Psoas muscle (tissue), 8 donors: ENCODE measurements at regions of chr2 and their contacts with region 1.

Region 1: GRCh38 chr2:231925303-231926179 is 655 bp downstream of the NPPC start:
- DNase-seq: peak; percentile 86 to 93
- ATAC-seq: peak; percentile 92 to 98 (median 95)
- H3K4me3 ChIP-seq: peak overlapping the region; percentile 63
- H3K27ac ChIP-seq: no peak overlapping the region
- H3K4me1 ChIP-seq: peaks cover 22% of the 10 kb centered on the region
- H3K27me3 ChIP-seq: peaks cover 0 to 84% (median 13%) of the 10 kb centered on the region in 3 donors
- CTCF ChIP-seq: peak; percentile 94

Region 2: GRCh38 chr2:231557571-231558237 is 367.8 kb before region 1 on chr2:
- intact Hi-C with region 1: no loop called
- DNase-seq: peak; percentile 36 to 86
- ATAC-seq: peak; percentile 92 to 98 (median 96)
- H3K4me3 ChIP-seq: no peak overlapping the region
- H3K27ac ChIP-seq: peak overlapping the region; percentile 36
- H3K4me1 ChIP-seq: peaks cover 3% of the 10 kb centered on the region
- H3K27me3 ChIP-seq: no peaks in the 10 kb centered on the region
- CTCF ChIP-seq: peak; percentile 74

Region 3: DNA sequence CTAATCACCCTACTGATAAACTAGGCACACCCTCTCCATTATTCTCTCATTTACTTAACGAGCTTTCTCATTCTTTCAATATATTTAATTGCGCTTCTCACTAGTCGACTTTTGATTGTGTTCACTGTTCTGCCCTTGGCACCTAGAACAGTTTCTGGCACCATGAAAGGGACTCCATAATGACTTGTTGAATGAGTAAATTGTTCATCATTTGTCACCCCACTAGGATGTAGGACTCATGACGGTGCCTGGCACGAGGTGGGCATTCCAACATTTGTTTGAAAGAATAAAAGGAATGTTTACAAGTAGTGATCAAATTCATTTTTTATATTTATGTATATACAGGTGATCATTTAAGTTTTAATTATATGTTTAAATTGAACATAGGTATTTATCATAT is 159.6 kb after region 1 on chr2:
- intact Hi-C with region 1: no loop called
- DNase-seq: no peak
- ATAC-seq: no peak
- H3K4me3 ChIP-seq: no peak overlapping the region
- H3K27ac ChIP-seq: no peak overlapping the region
- H3K4me1 ChIP-seq: no peaks in the 10 kb centered on the region
- H3K27me3 ChIP-seq: no peaks in the 10 kb centered on the region
- CTCF ChIP-seq: no peak

Region 4: DNA sequence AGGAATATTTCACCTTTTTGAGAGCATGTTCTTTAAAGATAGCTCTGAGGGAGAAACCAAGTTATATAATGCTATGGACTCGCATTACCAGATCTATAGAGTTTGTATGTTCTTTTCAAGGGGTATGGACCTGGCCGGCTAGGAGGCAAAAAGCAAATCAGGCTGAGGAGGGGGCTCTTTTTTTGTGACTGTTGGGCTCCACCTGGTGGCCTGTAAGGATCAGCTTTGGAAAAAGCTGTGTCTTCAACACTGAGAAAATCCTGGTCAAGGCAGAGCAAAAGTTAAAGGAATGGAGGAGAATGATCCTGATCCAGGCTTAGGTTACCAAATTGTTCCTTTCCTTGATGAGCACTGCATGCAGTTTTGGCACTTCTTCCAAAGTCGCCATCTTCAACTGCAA is 216.5 kb after region 1 on chr2:
- intact Hi-C with region 1: loop called (anchors 1 to 5 kb)
- DNase-seq: no peak
- ATAC-seq: peak; percentile 52 to 75 (median 54)
- H3K4me3 ChIP-seq: no peak overlapping the region
- H3K27ac ChIP-seq: no peak overlapping the region
- H3K4me1 ChIP-seq: peaks cover 5% of the 10 kb centered on the region
- H3K27me3 ChIP-seq: no peaks in the 10 kb centered on the region
- CTCF ChIP-seq: peak; percentile 67

Region 5: DNA sequence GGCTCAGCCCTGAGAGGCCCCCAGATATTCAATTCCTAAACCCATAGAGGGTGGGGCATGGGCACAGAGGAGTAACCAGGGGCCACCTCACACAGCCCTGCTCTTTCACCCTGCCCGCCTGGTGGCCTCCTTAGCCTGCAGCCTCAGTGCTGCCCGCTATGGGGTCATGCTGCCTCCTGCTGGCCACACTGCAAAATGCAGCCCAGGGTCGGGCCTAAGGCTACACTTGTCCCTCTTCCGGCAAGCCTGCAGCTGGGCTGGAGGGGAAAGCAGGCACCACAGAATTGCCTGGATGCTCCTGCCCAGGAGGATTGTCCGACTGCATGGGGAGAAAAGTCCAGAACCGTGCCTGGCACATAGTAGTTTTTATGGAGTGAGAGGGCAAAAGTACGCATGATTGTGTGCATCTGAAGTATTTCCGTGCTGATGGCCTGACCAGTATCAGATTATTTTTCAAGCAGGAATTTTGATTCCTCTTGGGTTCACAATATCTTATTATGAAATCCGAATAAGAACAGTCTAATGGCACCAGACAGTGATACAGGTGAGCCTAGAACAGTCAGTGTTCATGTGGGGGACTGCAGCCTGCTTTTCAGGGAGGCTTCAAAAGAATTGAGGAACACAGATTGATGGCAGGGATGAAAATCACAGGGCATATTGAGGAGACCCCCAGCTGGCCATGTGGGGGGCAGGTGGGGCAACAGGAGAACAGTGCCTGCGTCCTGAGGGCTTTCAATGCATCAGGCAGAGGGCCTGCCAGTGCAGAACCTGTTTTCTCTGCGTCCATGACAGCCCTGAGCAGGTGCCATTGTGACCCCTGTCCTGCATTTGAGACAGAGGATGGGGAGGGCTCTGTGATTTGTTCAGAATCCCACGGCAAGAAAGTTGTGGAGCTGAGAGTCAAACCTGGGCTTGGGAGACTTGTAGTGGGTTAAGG is 401.8 kb after region 1 on chr2:
- intact Hi-C with region 1: loop called (anchors 1 to 2 kb)
- DNase-seq: peak; percentile 77 to 85
- ATAC-seq: peak; percentile 55 to 77 (median 75)
- H3K4me3 ChIP-seq: no peak overlapping the region
- H3K27ac ChIP-seq: no peak overlapping the region
- H3K4me1 ChIP-seq: no peaks in the 10 kb centered on the region
- H3K27me3 ChIP-seq: no peaks in the 10 kb centered on the region
- CTCF ChIP-seq: peak; percentile 73

Region 6: GRCh38 chr2:232511336-232511888 is 585.9 kb after region 1 on chr2:
- intact Hi-C with region 1: loop called in 1 of 2 experiments (anchors 10 kb)
- DNase-seq: peak in 1 of 2 donors; percentile 76
- ATAC-seq: peak; percentile 56 to 86 (median 74)
- H3K4me3 ChIP-seq: no peak overlapping the region
- H3K27ac ChIP-seq: no peak overlapping the region
- H3K4me1 ChIP-seq: peaks cover 13% of the 10 kb centered on the region
- H3K27me3 ChIP-seq: no peaks in the 10 kb centered on the region
- CTCF ChIP-seq: no peak